ENCODE measurements at regions of chrX and their contacts with region 1.

Region 1: DNA sequence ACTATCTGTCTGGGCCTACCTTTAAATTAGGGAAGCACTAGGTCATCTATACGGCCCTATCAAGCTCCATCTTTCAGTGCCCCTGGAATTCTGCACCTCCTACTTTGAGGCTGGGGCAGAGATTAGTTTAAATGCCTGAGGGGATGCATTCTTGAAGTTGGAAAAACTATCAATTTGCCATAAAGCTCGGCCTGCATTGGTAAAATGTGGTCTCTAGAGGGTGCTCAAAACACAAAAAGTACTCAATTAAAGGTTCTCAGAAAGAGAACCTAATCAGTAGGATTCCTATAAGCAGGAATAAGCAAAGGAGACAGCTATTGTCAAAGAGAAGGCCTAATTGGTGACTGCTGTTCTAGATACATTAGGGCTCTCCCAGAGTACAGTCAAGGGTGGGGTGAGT is 111.7 kb downstream of the AMER1 start:
- DNase-seq: peak; percentile 39
- ATAC-seq: peak; percentile 35; the same call in 1 of the 2 replicates
- H3K4me3 ChIP-seq: no peak overlapping the region
- H3K27ac ChIP-seq: no peak overlapping the region
- H3K4me1 ChIP-seq: no peaks in the 10 kb centered on the region
- H3K27me3 ChIP-seq: no peaks in the 10 kb centered on the region
- CTCF ChIP-seq: peak; percentile 53

Region 2: DNA sequence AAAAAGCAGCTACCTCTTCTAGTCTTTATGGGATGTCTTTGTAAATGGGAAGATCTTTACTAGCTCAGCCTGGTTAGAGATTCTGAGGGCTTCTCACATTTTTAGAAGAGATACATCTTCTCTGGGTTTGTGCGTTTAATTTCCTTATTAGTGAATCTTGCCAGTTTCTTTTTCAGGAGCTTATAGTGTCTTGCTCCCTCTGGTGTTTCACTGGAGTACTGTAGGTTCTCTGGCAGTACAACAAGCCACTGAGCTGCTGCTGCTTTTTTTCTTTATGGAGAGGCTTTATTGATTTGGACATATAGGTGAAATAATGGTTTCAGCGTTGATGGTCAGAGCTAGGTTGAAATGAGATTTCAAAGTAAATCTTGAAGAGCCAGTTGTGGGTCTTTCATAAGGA is 1357.9 kb after region 1 on chrX:
- CTCF ChIA-PET with region 1: interaction called, 5 read pairs
- POLR2A ChIA-PET with region 1: no interaction called
- intact Hi-C with region 1: loop called (anchors 5 kb)
- DNase-seq: peak; percentile 53
- ATAC-seq: peak; percentile 48; the same call in 1 of the 2 replicates
- H3K4me3 ChIP-seq: no peak overlapping the region
- H3K27ac ChIP-seq: no peak overlapping the region
- H3K4me1 ChIP-seq: no peaks in the 10 kb centered on the region
- H3K27me3 ChIP-seq: no peaks in the 10 kb centered on the region
- CTCF ChIP-seq: peak; percentile 74